Activated CD8-positive, alpha-beta memory T cell treated with anti-CD3 and anti-CD28 coated beads, Interleukin-2, amount 10 ng/mL, durations not matched to agents 7 days and 5 days (primary cell): ENCODE measurements at regions of chr4 and their contacts with region 1.

Region 1: DNA sequence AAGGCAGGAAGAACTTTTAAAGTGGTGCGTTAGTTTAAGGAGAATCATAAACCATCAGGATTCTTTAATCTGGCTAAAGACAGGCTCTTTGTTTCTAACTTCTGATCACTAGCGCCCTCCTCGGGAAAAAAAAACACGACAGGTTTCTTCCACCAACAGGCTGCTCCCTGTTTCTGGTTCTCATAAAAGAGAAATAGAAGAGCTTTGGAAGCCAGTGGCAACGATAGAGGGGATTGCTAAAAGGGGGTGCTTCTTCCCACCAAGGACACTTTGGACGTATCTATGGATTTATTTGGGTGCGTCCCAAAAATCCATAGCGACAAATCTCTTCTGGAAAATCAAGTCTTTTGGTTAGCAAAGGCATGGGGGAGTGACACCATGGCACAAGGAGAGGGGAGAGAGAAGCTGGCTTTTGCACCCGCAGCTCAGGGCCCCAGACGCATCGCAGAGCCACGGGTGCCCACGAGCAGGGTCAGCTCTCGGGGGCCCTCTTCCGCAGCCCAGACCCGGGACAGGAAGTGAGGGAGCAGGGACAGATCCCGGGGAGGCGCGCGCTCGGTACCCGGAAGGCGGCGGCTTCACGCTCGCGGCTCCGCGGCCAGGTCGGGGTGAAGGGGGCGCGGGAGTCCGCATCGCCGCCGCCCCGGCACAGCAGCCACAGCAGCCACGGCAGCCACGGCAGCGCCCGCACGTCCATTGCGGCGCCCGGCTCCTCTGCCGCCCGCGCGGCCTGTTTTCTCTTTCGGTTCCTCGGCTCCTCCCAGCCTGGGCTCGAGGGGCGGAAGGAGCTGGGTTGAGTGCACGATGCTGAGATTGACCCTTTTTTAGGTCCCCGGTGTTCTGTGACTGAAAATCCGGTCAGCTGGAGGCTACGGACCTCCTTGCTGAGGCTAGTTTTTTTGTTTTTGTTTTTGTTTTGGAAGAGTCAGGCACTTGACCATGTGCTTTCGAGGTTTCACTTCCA is at the start of gene CTSO:
- DNase-seq: peak; percentile 83
- ATAC-seq: peak; percentile 95
- H3K4me3 Mint-ChIP-seq: peak within 1 kb of the TSS; percentile 89
- H3K27ac Mint-ChIP-seq: peak within 1 kb of the TSS; percentile 100
- H3K4me1 Mint-ChIP-seq: peaks cover 12% of the 10 kb centered on the region
- H3K27me3 Mint-ChIP-seq: no peaks in the 10 kb centered on the region
- total RNA-seq, gene CTSO: 3.0 to 3.4 TPM

Region 2: GRCh38 chr4:155809835-155810234 is 143.6 kb before region 1 on chr4:
- CTCF ChIA-PET with region 1: interaction called, 30 read pairs
- DNase-seq: no peak
- ATAC-seq: peak; percentile 85
- H3K4me3 Mint-ChIP-seq: no peak overlapping the region
- H3K27ac Mint-ChIP-seq: no peak overlapping the region
- H3K4me1 Mint-ChIP-seq: no peaks in the 10 kb centered on the region
- H3K27me3 Mint-ChIP-seq: no peaks in the 10 kb centered on the region

Region 3: DNA sequence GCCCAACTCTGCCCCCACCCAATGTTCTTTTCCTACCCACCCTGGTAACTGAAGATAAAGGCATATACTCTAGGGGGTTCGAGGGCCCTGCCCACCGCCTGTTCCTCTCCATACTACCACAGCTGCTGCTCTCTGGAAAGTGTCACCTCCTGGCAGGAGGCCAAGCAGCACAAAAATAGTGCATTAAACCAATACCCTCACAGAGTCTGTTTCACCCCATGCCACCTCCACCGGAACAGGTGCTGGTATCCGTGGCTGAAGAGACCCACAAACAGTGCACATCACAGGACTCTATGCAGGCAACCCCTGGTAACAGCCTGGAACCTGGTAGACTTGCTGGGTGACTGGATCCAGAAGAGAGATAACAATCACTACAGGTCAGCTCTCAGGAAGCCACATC is 85.3 kb after region 1 on chr4:
- CTCF ChIA-PET with region 1: no interaction called
- DNase-seq: no peak
- ATAC-seq: no peak
- H3K4me3 Mint-ChIP-seq: no peak overlapping the region
- H3K27ac Mint-ChIP-seq: no peak overlapping the region
- H3K4me1 Mint-ChIP-seq: no peaks in the 10 kb centered on the region
- H3K27me3 Mint-ChIP-seq: no peaks in the 10 kb centered on the region